Ovary (tissue), 10 donors: ENCODE measurements at regions of chr13 and their contacts with region 1.

Region 1: GRCh38 chr13:110715395-110716235 is 2.1 kb downstream of the ING1 start:
- DNase-seq: peak; percentile 96 to 99 (median 97)
- H3K4me3 ChIP-seq: peak overlapping the region; percentile 90
- H3K27ac ChIP-seq: peak overlapping the region; percentile 96 to 99
- H3K4me1 ChIP-seq: peaks cover 3% of the 10 kb centered on the region
- H3K27me3 ChIP-seq: no peaks in the 10 kb centered on the region
- CTCF ChIP-seq: peak in 2 of 3 donors; percentile 43
- EP300 ChIP-seq: peak; percentile 70
- POLR2A ChIP-seq: peak; percentile 79

Region 2: GRCh38 chr13:109274188-109274821 is 1441.3 kb before region 1 on chr13:
- intact Hi-C with region 1: no loop called
- DNase-seq: no peak
- H3K4me3 ChIP-seq: no peak overlapping the region
- H3K27ac ChIP-seq: no peak overlapping the region
- H3K4me1 ChIP-seq: peaks cover 2% of the 10 kb centered on the region
- H3K27me3 ChIP-seq: no peaks in the 10 kb centered on the region
- CTCF ChIP-seq: no peak
- EP300 ChIP-seq: no peak
- POLR2A ChIP-seq: no peak

Region 3: GRCh38 chr13:110615322-110616102 is 100.1 kb before region 1 on chr13 and contains the start of gene NAXD:
- intact Hi-C with region 1: loop called in 2 of 4 experiments (anchors 5 kb)
- DNase-seq: peak; percentile 93 to 94 (median 93)
- H3K4me3 ChIP-seq: peak within 1 kb of the TSS; percentile 81
- H3K27ac ChIP-seq: peak within 1 kb of the TSS; percentile 89
- H3K4me1 ChIP-seq: peaks cover 23% of the 10 kb centered on the region
- H3K27me3 ChIP-seq: no peaks in the 10 kb centered on the region
- CTCF ChIP-seq: no peak
- EP300 ChIP-seq: no peak
- POLR2A ChIP-seq: peak; percentile 55
- total RNA-seq, gene NAXD: 38.1 to 67.1 (median 56.9) TPM

Region 4: DNA sequence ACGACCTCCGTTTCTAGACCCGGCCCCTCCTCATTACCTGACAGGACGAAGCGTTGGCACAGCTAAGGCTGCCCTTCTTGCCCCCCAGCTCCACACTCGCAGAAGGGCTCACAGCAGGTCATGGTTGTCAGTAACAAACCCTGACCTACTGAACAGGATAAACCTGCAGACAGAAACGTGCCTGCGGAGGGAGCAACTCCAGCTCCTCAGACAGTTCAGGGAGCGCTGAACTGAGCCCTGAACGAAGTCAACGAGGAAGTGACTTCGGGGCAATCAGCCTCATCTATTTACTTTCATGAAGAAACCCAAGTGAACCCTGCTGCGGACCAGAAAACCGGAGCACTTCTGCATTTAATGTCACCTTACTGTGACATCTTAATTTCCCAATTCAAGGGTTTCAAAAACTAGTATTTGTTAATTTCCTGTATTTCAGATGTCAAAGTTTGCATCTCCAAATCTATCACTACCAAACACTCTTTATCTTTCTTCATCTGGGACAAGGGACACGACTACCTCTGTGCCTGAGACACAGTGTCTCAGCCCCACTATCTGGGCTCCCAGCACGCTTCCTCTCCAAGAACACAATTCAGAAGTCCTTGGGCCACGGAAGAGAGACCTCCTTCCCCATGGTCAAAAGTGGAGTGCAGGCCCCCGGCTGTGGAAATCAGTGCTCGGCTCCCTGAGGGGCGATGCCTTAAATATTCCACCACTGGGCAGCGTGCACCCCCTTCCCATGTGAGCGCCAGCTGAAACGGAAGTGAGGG is 49.9 kb before region 1 on chr13:
- intact Hi-C with region 1: no loop called
- DNase-seq: no peak
- H3K4me3 ChIP-seq: no peak overlapping the region
- H3K27ac ChIP-seq: no peak overlapping the region
- H3K4me1 ChIP-seq: no peaks in the 10 kb centered on the region
- H3K27me3 ChIP-seq: no peaks in the 10 kb centered on the region
- CTCF ChIP-seq: no peak
- EP300 ChIP-seq: no peak
- POLR2A ChIP-seq: no peak

Region 5: GRCh38 chr13:110819203-110820014 is 103.8 kb after region 1 on chr13:
- intact Hi-C with region 1: loop called in 1 of 4 experiments (anchors 10 kb)
- DNase-seq: peak; percentile 64 to 85 (median 82)
- H3K4me3 ChIP-seq: no peak overlapping the region
- H3K27ac ChIP-seq: no peak overlapping the region
- H3K4me1 ChIP-seq: no peaks in the 10 kb centered on the region
- H3K27me3 ChIP-seq: no peaks in the 10 kb centered on the region
- CTCF ChIP-seq: peak; percentile 90 to 95 (median 94)
- EP300 ChIP-seq: no peak
- POLR2A ChIP-seq: no peak

Region 6: GRCh38 chr13:111011899-111012298 is 296.3 kb after region 1 on chr13:
- intact Hi-C with region 1: no loop called
- DNase-seq: no peak
- H3K4me3 ChIP-seq: no peak overlapping the region
- H3K27ac ChIP-seq: no peak overlapping the region
- H3K4me1 ChIP-seq: peaks cover 1% of the 10 kb centered on the region
- H3K27me3 ChIP-seq: no peaks in the 10 kb centered on the region
- CTCF ChIP-seq: no peak
- EP300 ChIP-seq: no peak
- POLR2A ChIP-seq: no peak

Region 7: DNA sequence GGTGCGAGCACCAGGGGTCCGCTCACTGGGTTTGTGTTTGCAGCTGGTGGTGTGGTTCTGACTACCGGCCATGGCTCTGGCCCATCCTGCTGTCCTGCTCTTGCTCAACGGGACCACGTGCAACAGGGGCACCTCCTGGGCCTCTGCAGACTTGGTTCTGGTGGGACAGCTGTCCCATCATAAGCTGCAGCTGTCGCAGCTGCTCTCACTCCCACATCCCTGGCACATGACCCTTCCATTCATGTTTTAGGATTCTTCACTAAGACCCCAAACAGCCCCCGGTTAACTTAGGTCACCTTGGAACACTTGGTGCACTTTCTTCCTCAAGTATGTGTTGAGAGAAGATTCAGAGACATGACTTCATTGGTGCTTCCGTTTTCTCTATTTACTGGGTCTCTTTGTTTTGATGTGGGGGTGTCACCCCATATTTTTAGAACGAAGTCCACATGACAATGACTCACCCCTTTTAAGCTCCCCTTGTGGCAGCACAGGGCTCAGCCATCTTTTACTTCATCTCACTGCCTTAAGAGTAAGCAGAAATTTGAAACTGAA is 331.1 kb after region 1 on chr13:
- intact Hi-C with region 1: no loop called
- DNase-seq: no peak
- H3K4me3 ChIP-seq: no peak overlapping the region
- H3K27ac ChIP-seq: no peak overlapping the region
- H3K4me1 ChIP-seq: peaks cover 2% of the 10 kb centered on the region
- H3K27me3 ChIP-seq: no peaks in the 10 kb centered on the region
- CTCF ChIP-seq: no peak
- EP300 ChIP-seq: no peak
- POLR2A ChIP-seq: no peak